Activated CD4-positive, alpha-beta T cell treated with anti-CD3 and anti-CD28 coated beads for 36 hours (primary cell): ENCODE measurements at regions of chr5 and their contacts with region 1.

Region 1: GRCh38 chr5:124583469-124584350 is 162.7 kb downstream of the ZNF608 start:
- DNase-seq: peak; percentile 47
- ATAC-seq: peak; percentile 95
- H3K4me3 Mint-ChIP-seq: no peak overlapping the region
- H3K27ac Mint-ChIP-seq: no peak overlapping the region
- H3K4me1 Mint-ChIP-seq: peaks cover 23% of the 10 kb centered on the region
- H3K27me3 Mint-ChIP-seq: peaks cover 5% of the 10 kb centered on the region

Region 2: DNA sequence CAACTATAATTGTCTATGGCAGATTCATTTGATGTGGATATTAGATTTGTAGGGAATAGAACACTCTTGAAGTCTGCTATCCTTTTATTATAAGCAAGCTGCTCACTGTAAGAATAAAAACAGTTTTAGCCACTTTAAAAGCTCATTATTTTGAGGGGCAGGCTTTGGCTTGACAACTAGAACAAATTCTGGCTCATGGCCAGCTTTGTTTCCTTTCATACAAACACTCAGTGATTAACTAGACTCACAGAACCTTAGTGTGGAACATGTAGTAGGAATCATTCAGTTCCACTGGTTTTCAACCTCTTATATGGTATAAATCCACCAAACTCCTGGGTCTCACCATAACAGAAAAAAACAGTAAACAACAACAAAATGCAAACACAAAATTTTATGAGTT is 1133.1 kb before region 1 on chr5:
- CTCF ChIA-PET with region 1: no interaction called
- POLR2A ChIA-PET with region 1: no interaction called
- intact Hi-C with region 1: loop called in 1 of 2 experiments (anchors 10 kb)
- DNase-seq: no peak
- ATAC-seq: no peak
- H3K4me3 Mint-ChIP-seq: no peak overlapping the region
- H3K27ac Mint-ChIP-seq: no peak overlapping the region
- H3K4me1 Mint-ChIP-seq: peaks cover 33% of the 10 kb centered on the region
- H3K27me3 Mint-ChIP-seq: peaks cover 9% of the 10 kb centered on the region

Region 3: DNA sequence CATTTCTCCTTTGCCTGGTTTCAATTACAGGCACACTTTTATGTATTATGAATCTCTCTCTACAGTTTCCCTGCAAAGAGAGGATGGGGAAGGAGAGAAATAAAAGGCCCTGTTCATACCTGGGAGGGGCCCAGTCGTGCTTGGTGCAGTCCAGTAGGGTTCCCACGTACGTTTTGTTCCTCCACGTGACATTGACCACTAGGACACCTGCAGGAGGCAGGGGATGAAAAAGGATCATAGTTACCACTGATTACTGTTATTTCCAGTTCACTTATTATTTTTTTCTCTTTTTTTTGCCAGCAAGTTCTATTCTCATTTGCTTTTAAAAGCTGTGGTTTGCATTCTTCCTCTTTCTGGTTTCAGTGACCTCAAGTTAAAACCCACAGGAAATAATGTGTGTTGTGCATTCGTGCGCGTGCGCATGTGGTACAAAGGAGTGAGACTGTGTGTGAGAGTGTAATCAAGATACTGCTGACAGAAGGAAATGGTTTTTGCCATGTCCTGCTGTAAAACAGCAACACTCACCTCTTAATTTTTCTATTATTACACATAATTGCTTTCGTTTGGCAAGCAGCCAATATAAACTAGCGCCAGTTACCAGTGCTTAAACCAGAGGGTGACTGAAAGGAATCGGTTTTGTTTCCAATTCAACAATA is 65.9 kb after region 1 on chr5:
- CTCF ChIA-PET with region 1: no interaction called
- POLR2A ChIA-PET with region 1: no interaction called
- intact Hi-C with region 1: loop called (anchors 1 kb)
- DNase-seq: peak; percentile 78
- ATAC-seq: peak; percentile 85
- H3K4me3 Mint-ChIP-seq: peak overlapping the region; percentile 37
- H3K27ac Mint-ChIP-seq: no peak overlapping the region
- H3K4me1 Mint-ChIP-seq: peaks cover 26% of the 10 kb centered on the region
- H3K27me3 Mint-ChIP-seq: peaks cover 37% of the 10 kb centered on the region

Region 4: GRCh38 chr5:124748687-124749594 is 165.2 kb after region 1 on chr5:
- CTCF ChIA-PET with region 1: no interaction called
- POLR2A ChIA-PET with region 1: no interaction called
- intact Hi-C with region 1: loop called in 1 of 2 experiments (anchors 5 kb)
- DNase-seq: peak; percentile 43
- ATAC-seq: peak; percentile 90
- H3K4me3 Mint-ChIP-seq: peak overlapping the region; percentile 63
- H3K27ac Mint-ChIP-seq: no peak overlapping the region
- H3K4me1 Mint-ChIP-seq: peaks cover 32% of the 10 kb centered on the region
- H3K27me3 Mint-ChIP-seq: peaks cover 45% of the 10 kb centered on the region